ENCODE measurements at regions of chr3 and their contacts with region 1.

Region 1: DNA sequence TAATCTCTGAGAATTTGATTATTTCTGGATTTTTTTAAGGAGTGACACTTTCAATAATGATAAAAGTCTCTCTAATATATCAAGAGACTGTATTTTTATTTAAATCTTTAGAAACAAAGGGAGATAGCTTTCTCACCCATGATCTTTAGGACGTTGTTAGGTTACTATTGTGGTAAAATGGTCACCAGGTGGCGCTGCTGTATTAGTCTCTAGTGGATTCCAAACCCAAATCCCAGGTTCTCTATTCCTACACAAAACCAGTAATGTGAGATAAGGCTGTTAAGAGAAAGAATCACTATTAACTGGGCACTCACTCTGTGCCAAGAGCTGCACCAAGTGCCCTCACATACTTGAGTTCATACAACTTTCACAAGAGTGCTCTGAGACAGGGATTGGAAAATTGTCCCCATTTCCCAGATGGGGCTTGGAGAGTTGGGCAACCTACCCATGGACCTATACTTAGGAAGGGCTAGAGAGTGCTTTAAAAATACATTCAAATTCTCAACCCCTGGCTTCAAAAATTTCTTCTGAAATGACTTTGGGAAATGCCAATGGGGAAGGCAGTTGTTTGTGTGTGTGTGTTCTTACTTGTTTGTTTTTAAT is 593.4 kb upstream of the TGFBR2 start:
- DNase-seq: peak; percentile 43 to 75 (median 60)
- H3K4me3 ChIP-seq: no peak overlapping the region
- H3K4me3 Mint-ChIP-seq: no peak overlapping the region
- H3K27ac ChIP-seq: no peak overlapping the region
- H3K27ac Mint-ChIP-seq: no peak overlapping the region
- H3K4me1 ChIP-seq: peaks cover 0 to under 1% of the 10 kb centered on the region in 2 donors
- H3K4me1 Mint-ChIP-seq: no peaks in the 10 kb centered on the region
- H3K27me3 ChIP-seq: no peaks in the 10 kb centered on the region
- H3K27me3 Mint-ChIP-seq: no peaks in the 10 kb centered on the region
- CTCF ChIP-seq: peak; percentile 87

Region 2: GRCh38 chr3:30426293-30426993 is 413.4 kb after region 1 on chr3:
- intact Hi-C with region 1: no loop called
- DNase-seq: no peak
- H3K4me3 ChIP-seq: no peak overlapping the region
- H3K4me3 Mint-ChIP-seq: no peak overlapping the region
- H3K27ac ChIP-seq: no peak overlapping the region
- H3K27ac Mint-ChIP-seq: peak overlapping the region in 1 of 7 donors; percentile 63
- H3K4me1 ChIP-seq: peaks cover 5 to 9% of the 10 kb centered on the region in 2 donors
- H3K4me1 Mint-ChIP-seq: peaks cover 7% of the 10 kb centered on the region
- H3K27me3 ChIP-seq: no peaks in the 10 kb centered on the region
- H3K27me3 Mint-ChIP-seq: no peaks in the 10 kb centered on the region
- CTCF ChIP-seq: no peak

Region 3: GRCh38 chr3:30693470-30694120 is 680.6 kb after region 1 on chr3:
- intact Hi-C with region 1: loop called (anchors 10 kb)
- DNase-seq: peak; percentile 45 to 61 (median 51)
- H3K4me3 ChIP-seq: no peak overlapping the region
- H3K4me3 Mint-ChIP-seq: no peak overlapping the region
- H3K27ac ChIP-seq: peak overlapping the region in 1 of 2 donors; percentile 5
- H3K27ac Mint-ChIP-seq: peak overlapping the region in 1 of 7 donors; percentile 7
- H3K4me1 ChIP-seq: no peaks in the 10 kb centered on the region
- H3K4me1 Mint-ChIP-seq: peaks cover 24% of the 10 kb centered on the region
- H3K27me3 ChIP-seq: no peaks in the 10 kb centered on the region
- H3K27me3 Mint-ChIP-seq: no peaks in the 10 kb centered on the region
- CTCF ChIP-seq: peak; percentile 87